Activated CD8-positive, alpha-beta T cell treated with anti-CD3 and anti-CD28 coated beads, Interleukin-2, amount 10 ng/mL, durations not matched to agents 7 days and 5 days (primary cell): ENCODE measurements at regions of chr12 and their contacts with region 1.

Region 1: GRCh38 chr12:112382232-112382796 is at the start of gene HECTD4:
- DNase-seq: peak; percentile 95
- ATAC-seq: peak; percentile 98
- H3K4me3 Mint-ChIP-seq: peak within 1 kb of the TSS; percentile 97
- H3K27ac Mint-ChIP-seq: peak within 1 kb of the TSS; percentile 92
- H3K4me1 Mint-ChIP-seq: peaks cover 29% of the 10 kb centered on the region
- H3K27me3 Mint-ChIP-seq: no peaks in the 10 kb centered on the region
- total RNA-seq, gene HECTD4: 39.3 to 47.8 TPM

Region 2: GRCh38 chr12:112130441-112130998 is 251.8 kb before region 1 on chr12:
- CTCF ChIA-PET with region 1: interaction called, 10 read pairs
- POLR2A ChIA-PET with region 1: no interaction called
- DNase-seq: no peak
- ATAC-seq: peak; percentile 61
- H3K4me3 Mint-ChIP-seq: peak overlapping the region; percentile 56
- H3K27ac Mint-ChIP-seq: peak overlapping the region; percentile 87
- H3K4me1 Mint-ChIP-seq: peaks cover 55% of the 10 kb centered on the region
- H3K27me3 Mint-ChIP-seq: no peaks in the 10 kb centered on the region

Region 3: GRCh38 chr12:112198120-112198733 is 184.1 kb before region 1 on chr12:
- CTCF ChIA-PET with region 1: interaction called, 109 read pairs
- POLR2A ChIA-PET with region 1: interaction called, 4 read pairs
- DNase-seq: peak; percentile 72
- ATAC-seq: peak; percentile 93
- H3K4me3 Mint-ChIP-seq: no peak overlapping the region
- H3K27ac Mint-ChIP-seq: peak overlapping the region; percentile 19
- H3K4me1 Mint-ChIP-seq: no peaks in the 10 kb centered on the region
- H3K27me3 Mint-ChIP-seq: no peaks in the 10 kb centered on the region

Region 4: DNA sequence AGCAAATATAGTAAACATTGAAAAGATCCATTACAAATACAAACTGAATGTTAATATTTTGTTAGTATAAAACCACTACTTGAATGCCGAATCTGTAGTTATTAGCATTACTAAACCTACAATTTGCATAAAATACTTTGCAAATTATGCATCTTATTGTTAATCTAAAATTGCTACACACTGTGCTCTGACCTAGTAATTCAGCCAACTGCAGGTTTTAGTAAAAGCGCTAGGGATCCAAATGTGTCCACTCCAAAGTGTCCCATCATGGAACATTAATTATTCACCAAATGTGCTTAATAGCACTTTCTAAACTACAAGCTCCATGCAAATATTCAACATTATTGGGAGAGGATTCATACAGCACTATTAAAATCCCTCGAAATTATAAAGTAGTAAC is 14.3 kb before region 1 on chr12:
- CTCF ChIA-PET with region 1: no interaction called
- POLR2A ChIA-PET with region 1: no interaction called
- DNase-seq: no peak
- ATAC-seq: no peak
- H3K4me3 Mint-ChIP-seq: no peak overlapping the region
- H3K27ac Mint-ChIP-seq: no peak overlapping the region
- H3K4me1 Mint-ChIP-seq: peaks cover 6% of the 10 kb centered on the region
- H3K27me3 Mint-ChIP-seq: no peaks in the 10 kb centered on the region

Region 5: DNA sequence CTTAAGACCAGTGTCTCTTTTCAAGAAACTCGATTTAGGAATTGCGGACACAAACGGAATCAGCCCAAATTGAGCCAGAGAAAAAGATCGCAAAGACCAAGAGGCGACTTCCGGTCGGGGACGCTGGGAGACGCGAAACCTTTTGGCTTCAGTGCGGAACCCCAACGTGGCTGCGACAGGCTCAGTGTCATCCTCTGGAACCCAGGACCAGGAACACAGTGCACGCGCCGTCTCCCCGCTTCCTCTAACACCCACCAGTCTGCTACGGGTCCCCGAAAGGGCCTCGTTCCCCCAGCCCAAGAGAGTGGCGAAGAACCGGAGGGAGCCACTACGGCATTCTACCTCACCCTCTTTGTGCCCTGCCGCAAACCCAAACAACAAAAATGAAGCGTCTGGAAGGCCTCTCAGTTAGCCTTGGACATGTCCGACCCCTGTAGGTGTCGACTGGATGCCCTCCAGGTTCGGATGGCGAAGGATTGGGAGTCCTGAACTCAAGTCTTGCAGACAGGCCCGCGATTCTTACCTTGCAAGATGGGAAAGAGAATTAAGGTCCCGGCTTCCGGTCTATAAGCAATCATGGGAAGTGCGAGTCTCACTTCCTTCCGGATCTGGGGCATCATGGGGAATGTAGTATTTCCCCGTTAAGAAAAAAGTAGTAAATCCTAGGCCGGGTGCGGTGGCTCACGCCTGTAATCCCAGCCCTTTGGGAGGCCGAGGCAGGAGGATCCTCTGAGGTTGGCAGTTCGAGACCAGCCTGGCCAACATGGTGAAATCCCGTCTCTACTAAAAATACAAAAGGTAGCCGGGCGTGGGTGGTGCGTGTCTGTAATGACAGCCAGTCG is 27.0 kb after region 1 on chr12 and contains the start of gene RPL6:
- CTCF ChIA-PET with region 1: interaction called, 12 read pairs
- POLR2A ChIA-PET with region 1: no interaction called
- DNase-seq: peak; percentile 88
- ATAC-seq: peak; percentile 85
- H3K4me3 Mint-ChIP-seq: peak within 1 kb of the TSS; percentile 99
- H3K27ac Mint-ChIP-seq: peak within 1 kb of the TSS; percentile 100
- H3K4me1 Mint-ChIP-seq: peaks cover 42% of the 10 kb centered on the region
- H3K27me3 Mint-ChIP-seq: no peaks in the 10 kb centered on the region
- total RNA-seq, gene RPL6: 1,104 to 1,130 TPM